HepG2 (cell line): ENCODE measurements at regions of chr3 and their contacts with region 1.

Region 1: DNA sequence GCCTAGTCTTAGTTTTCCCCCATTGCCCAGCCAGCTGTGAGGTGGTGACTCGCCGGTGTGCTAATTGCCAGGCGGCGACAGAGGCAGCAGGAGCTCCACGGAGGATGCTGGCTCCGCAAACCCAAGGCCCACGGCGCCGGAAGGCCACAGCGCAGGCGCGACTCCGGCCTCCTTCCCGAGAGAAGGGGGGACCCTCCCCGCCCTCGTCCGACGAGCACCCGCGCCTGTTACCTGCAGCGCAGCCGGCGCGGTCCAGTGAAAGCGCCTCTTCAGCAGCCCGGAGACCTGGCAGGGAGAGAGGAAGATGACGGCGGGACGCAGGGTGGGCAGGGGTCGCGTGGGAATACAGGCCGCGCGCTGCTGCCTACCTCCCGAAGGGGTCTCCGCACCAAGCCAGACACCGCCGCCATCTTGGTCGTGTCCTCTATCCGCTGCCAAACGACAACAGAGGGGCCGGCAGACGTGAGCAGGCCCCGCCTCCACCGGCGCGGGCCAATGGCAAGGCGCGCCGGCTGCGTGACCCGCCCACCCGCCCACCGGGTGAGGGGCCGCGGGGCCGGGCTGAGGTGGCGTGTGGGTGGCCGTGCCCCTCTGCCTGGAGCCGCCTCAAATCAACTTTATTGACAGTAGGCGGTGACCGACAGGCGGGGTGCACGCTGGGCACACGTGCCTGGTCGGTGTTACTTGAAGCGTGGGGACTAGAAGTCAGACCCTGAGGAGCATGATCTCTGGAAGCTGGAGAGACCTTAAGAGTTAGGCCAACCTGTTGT is at the start of gene PDHB:
- DNase-seq: peak; percentile 77
- ATAC-seq: peak; percentile 97
- H3K4me3 ChIP-seq: peak within 1 kb of the TSS; percentile 68 to 97 (median 93)
- H3K27ac ChIP-seq: peak within 1 kb of the TSS; percentile 92
- H3K4me1 ChIP-seq: peaks cover 53% of the 10 kb centered on the region
- H3K27me3 ChIP-seq: peaks cover 0 to 1% of the 10 kb centered on the region in 2 experiments; a peak in 1 of 5 replicates
- CTCF ChIP-seq: peak; percentile 22; the same call in 1 of the 2 replicates
- EP300 ChIP-seq: peak in 1 of 2 experiments; percentile 73; a peak in 2 of 4 replicates
- POLR2A ChIP-seq: peak; percentile 86 to 93
- RAD21 ChIP-seq: peak; percentile 40
- total RNA-seq, gene PDHB: 153 and 229 TPM in 2 replicates

Region 2: DNA sequence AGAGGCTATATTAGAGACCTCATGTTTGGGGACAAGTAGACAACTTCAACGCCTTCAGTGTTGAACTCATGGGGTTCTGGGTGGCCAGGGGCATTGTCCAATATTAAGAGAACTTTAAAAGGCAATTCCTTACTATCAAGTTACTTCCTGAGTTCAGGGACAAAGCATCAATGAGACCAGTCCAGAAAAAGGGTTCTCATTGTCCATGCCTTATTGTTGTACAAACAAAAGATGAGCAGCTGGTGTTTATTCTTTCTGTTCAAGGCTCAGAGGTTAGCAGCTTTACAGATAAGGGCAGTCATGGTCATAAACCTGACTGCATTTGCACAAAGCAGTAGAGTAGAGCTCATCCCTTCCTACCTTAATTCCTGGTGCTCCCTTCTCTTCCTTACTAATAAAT is 18.6 kb after region 1 on chr3:
- CTCF ChIA-PET with region 1: no interaction called
- POLR2A ChIA-PET with region 1: interaction called, 11 read pairs
- in situ Hi-C with region 1: no loop called
- intact Hi-C with region 1: no loop called
- DNase-seq: peak; percentile 95
- ATAC-seq: peak; percentile 99
- H3K4me3 ChIP-seq: peak overlapping the region in 1 of 3 experiments; percentile 2; a peak in 1 of 6 replicates
- H3K27ac ChIP-seq: peak overlapping the region; percentile 83
- H3K4me1 ChIP-seq: peaks cover 34% of the 10 kb centered on the region
- H3K27me3 ChIP-seq: no peaks in the 10 kb centered on the region
- CTCF ChIP-seq: 0 out of 2 replicates have a peak, but pooled peaks have one; percentile 12
- EP300 ChIP-seq: peak; percentile 73 to 95; a peak in 3 of 4 replicates
- POLR2A ChIP-seq: peak; percentile 27 to 31; a peak in 1 of 4 replicates
- RAD21 ChIP-seq: no peak

Region 3: GRCh38 chr3:58520403-58521335 is 87.1 kb after region 1 on chr3:
- CTCF ChIA-PET with region 1: no interaction called
- POLR2A ChIA-PET with region 1: interaction called, 3 read pairs
- in situ Hi-C with region 1: no loop called
- intact Hi-C with region 1: loop called (anchors 2 kb)
- DNase-seq: peak; percentile 81
- ATAC-seq: peak; percentile 78
- H3K4me3 ChIP-seq: peak overlapping the region in 2 of 3 experiments; percentile 15 to 17; a peak in 2 of 6 replicates
- H3K27ac ChIP-seq: peak overlapping the region; percentile 88
- H3K4me1 ChIP-seq: peaks cover 91% of the 10 kb centered on the region
- H3K27me3 ChIP-seq: no peaks in the 10 kb centered on the region
- CTCF ChIP-seq: peak; percentile 73
- EP300 ChIP-seq: 0 out of 4 replicates have a peak, but pooled peaks of 1 of the 2 experiments have one; percentile 42
- POLR2A ChIP-seq: peak in 1 of 2 experiments; percentile 22; a peak in 1 of 4 replicates
- RAD21 ChIP-seq: peak; percentile 58